ENCODE measurements at regions of chr7 and their contacts with region 1.

Region 1: GRCh38 chr7:28179120-28180030 is 1.2 kb downstream of the JAZF1 start:
- DNase-seq: peak; percentile 48 to 75 (median 74)
- H3K4me3 ChIP-seq: peak overlapping the region; percentile 42 to 89 (median 42)
- H3K4me3 Mint-ChIP-seq: peak overlapping the region; percentile 85 to 87
- H3K27ac ChIP-seq: peak overlapping the region; percentile 11 to 77
- H3K27ac Mint-ChIP-seq: peak overlapping the region; percentile 43 to 89 (median 82)
- H3K4me1 ChIP-seq: peaks cover 30 to 42% of the 10 kb centered on the region in 2 donors
- H3K4me1 Mint-ChIP-seq: peaks cover 62% of the 10 kb centered on the region
- H3K27me3 ChIP-seq: no peaks in the 10 kb centered on the region
- H3K27me3 Mint-ChIP-seq: peaks cover 0 to 4% (median 2%) of the 10 kb centered on the region in 3 donors
- CTCF ChIP-seq: no peak

Region 2: GRCh38 chr7:28144266-28144665 is 35.1 kb before region 1 on chr7:
- intact Hi-C with region 1: loop called in 1 of 2 experiments (anchors 5 kb)
- DNase-seq: no peak
- H3K4me3 ChIP-seq: no peak overlapping the region
- H3K4me3 Mint-ChIP-seq: no peak overlapping the region
- H3K27ac ChIP-seq: no peak overlapping the region
- H3K27ac Mint-ChIP-seq: no peak overlapping the region
- H3K4me1 ChIP-seq: no peaks in the 10 kb centered on the region
- H3K4me1 Mint-ChIP-seq: peaks cover 11% of the 10 kb centered on the region
- H3K27me3 ChIP-seq: no peaks in the 10 kb centered on the region
- H3K27me3 Mint-ChIP-seq: peaks cover 0 to 2% (median 0%) of the 10 kb centered on the region in 3 donors
- CTCF ChIP-seq: peak; percentile 22

Region 3: GRCh38 chr7:28239823-28240204 is 60.4 kb after region 1 on chr7:
- intact Hi-C with region 1: loop called (anchors 5 to 10 kb)
- DNase-seq: peak; percentile 81 to 92 (median 82)
- H3K4me3 ChIP-seq: peak overlapping the region in 2 of 3 experiments; percentile 4 to 54
- H3K4me3 Mint-ChIP-seq: peak overlapping the region; percentile 65 to 81
- H3K27ac ChIP-seq: peak overlapping the region; percentile 85
- H3K27ac Mint-ChIP-seq: peak overlapping the region; percentile 83 to 98 (median 96)
- H3K4me1 ChIP-seq: peaks cover 61 to 67% of the 10 kb centered on the region in 2 donors
- H3K4me1 Mint-ChIP-seq: peaks cover 66% of the 10 kb centered on the region
- H3K27me3 ChIP-seq: no peaks in the 10 kb centered on the region
- H3K27me3 Mint-ChIP-seq: no peaks in the 10 kb centered on the region
- CTCF ChIP-seq: no peak

Region 4: DNA sequence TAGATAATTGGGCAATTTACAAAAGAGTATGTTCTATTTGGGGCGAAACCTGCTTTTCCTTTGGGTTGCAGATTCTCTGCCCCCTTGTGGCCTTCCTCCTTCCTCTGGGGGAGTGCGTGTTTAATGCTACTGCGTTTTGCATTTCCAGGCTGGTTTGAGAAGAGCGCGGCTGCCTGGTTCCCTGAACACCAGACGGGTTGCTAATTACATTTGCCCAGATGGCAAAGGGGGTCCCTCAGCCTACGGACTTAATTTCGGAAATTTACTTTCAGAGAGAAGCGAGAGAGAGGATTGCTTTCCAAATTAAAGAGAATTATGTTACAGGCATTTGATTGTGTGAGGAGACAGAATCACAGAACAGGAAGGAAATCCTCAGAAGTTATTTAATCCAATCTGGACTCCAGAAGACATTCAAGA is 93.1 kb after region 1 on chr7:
- intact Hi-C with region 1: loop called (anchors 5 to 10 kb)
- DNase-seq: peak; percentile 55 to 72 (median 58)
- H3K4me3 ChIP-seq: peak overlapping the region in 2 of 3 experiments; percentile 13 to 61
- H3K4me3 Mint-ChIP-seq: peak overlapping the region; percentile 72 to 94
- H3K27ac ChIP-seq: peak overlapping the region in 1 of 2 donors; percentile 49
- H3K27ac Mint-ChIP-seq: peak overlapping the region in 4 of 7 donors; percentile 78 to 85 (median 80)
- H3K4me1 ChIP-seq: peaks cover 19 to 21% of the 10 kb centered on the region in 2 donors
- H3K4me1 Mint-ChIP-seq: peaks cover 23% of the 10 kb centered on the region
- H3K27me3 ChIP-seq: peaks cover 2 to 5% of the 10 kb centered on the region in 2 donors
- H3K27me3 Mint-ChIP-seq: peaks cover 4 to 6% (median 5%) of the 10 kb centered on the region in 3 donors
- CTCF ChIP-seq: peak; percentile 77